Dendritic cell treated with granulocyte-macrophage colony-stimulating factor and Interleukin-4, amounts not matched to agents 40 ng/mL and 50 ng/mL, for 4 days (primary cell): ENCODE measurements at regions of chr16 and their contacts with region 1.

Region 1: GRCh38 chr16:31094424-31095120 is at the start of gene VKORC1:
- H3K4me3 Mint-ChIP-seq: peak within 1 kb of the TSS; percentile 88
- H3K27ac Mint-ChIP-seq: peak within 1 kb of the TSS; percentile 83
- H3K4me1 Mint-ChIP-seq: peaks cover 37% of the 10 kb centered on the region
- H3K27me3 Mint-ChIP-seq: no peaks in the 10 kb centered on the region

Region 2: DNA sequence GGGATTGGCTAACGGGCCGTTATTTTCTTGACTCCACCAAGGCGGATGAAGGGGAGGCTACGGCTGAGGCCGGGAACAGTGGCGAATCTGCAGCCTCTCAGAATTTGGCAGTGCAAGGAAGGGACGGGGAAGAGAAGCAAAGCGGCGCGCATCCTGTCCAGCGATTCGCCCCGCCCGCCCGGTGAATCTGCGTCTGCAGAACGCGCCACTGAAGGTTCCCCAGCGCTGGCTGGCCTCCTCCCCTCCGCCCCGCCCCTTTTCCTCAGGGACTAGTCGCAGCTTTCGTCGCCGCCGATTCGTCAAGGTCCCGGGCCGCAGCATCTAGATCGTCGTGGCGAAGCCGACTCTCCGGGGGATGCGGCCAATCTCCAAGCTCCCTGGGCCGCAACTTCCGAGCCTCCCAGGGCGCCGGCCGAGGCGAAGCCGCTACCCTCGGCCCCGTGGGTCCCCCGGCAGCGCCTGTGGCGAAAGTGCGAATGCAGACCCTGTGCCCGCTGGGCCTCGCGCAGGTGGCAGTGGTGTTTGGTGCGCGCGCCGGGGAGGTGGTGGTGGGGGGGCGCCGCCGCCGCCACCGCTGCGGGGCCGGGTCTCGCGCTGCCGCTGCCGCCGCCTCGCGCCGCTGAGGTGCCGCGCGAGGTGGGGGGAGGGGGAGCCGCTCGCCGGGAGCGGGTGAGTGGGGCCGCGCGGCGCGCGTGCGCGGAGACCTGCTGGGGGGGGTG is 137.0 kb before region 1 on chr16 and contains the start of gene SETD1A:
- intact Hi-C with region 1: loop called (anchors 10 kb)
- H3K4me3 Mint-ChIP-seq: peak within 1 kb of the TSS; percentile 82
- H3K27ac Mint-ChIP-seq: peak within 1 kb of the TSS; percentile 98
- H3K4me1 Mint-ChIP-seq: peaks cover 35% of the 10 kb centered on the region
- H3K27me3 Mint-ChIP-seq: no peaks in the 10 kb centered on the region

Region 3: DNA sequence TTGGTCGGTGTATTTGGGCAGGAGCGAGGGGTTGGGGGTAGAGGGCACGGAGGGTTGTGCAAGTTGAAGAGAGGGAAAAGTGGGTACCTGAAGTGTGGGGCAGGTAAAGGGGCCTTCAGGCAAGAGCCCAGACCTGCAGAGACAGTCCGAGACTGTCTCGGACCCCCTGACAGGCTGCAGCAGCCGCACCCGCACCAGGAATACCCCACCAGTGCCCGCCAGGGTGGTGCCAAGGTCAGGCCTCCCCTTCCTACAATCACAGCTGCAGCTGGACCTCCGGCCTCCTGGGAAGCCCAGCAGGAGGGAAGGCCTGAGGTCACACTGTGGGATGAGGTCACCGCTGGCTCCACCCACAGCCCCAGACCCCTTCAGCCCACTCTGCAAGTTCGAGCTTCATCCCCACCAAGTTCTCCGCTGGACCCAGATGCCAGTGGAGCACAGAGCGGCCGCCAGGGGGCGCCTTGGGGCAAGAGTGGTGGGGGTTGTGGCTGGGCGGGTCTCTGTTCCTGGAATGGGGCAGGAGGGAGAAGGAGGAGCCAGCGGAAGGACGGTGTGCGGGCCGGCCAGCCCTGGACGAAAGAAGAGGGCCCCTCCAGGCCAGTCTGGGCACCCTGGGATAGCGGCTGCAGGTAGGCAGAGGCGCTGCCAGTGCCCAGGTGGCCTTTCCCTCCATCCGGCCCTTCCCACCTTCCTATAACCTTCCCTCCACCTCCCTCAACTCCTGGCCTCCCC is 109.7 kb before region 1 on chr16 and contains the start of gene HSD3B7:
- intact Hi-C with region 1: loop called (anchors 1 kb)
- H3K4me3 Mint-ChIP-seq: peak within 1 kb of the TSS; percentile 86
- H3K27ac Mint-ChIP-seq: peak within 1 kb of the TSS; percentile 88
- H3K4me1 Mint-ChIP-seq: peaks cover 41% of the 10 kb centered on the region
- H3K27me3 Mint-ChIP-seq: no peaks in the 10 kb centered on the region

Region 4: DNA sequence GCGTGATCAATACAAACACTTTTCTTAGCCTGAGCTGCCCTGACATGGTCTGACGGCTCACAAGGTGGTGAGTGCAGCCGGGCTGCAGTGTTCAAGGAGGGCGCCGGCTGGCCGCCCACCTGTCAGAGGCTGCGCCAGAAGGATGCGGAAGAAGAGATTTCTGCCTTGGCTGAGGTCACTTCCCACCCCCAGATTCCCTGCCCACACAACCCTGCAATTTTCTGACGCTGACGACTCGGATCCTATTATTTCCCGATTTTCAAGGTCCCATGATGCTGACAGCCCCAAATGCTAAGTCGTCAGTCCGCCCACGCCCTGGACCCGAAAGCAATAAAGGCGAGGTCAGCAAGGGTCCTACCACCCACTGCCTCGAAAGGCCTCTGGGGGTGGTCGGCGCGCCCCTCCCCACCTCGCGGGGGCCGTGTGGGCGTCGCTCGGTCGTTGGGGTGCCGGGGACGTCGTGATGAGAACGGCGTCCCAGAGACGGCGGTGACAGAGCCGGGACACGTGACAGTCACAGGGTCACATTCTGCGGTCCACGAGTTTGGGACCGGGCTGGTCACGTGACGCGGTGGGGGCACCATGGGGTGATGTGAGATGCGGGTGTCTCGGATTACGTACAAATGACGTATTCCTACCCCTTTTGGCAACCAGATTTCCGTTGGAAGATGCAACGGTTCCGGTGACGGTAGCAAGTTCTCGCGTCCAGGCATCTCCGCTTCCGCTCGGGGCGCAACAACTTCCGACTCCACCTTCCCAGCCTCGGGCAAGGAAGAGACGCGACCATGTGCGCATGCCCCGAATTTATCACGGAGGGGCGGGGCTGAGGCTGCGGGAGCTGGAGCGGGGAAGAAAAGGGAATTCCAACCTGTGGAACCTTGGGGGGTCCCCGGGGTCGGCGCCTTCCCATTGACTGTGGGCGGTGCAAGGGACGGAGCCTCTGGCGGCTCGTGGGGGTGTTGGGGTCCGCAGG is 61.5 kb before region 1 on chr16 and contains the start of gene STX4:
- intact Hi-C with region 1: loop called (anchors 2 kb)
- H3K4me3 Mint-ChIP-seq: peak within 1 kb of the TSS; percentile 98
- H3K27ac Mint-ChIP-seq: peak within 1 kb of the TSS; percentile 99
- H3K4me1 Mint-ChIP-seq: peaks cover 62% of the 10 kb centered on the region
- H3K27me3 Mint-ChIP-seq: no peaks in the 10 kb centered on the region